Ascending aorta (tissue), 2 donors: ENCODE measurements at regions of chr11 and their contacts with region 1.

Region 1: GRCh38 chr11:3849297-3849874 is 6.1 kb upstream of the STIM1 start:
- DNase-seq: no peak
- H3K4me3 ChIP-seq: no peak overlapping the region
- H3K27ac ChIP-seq: no peak overlapping the region
- H3K4me1 ChIP-seq: no peaks in the 10 kb centered on the region
- H3K27me3 ChIP-seq: no peaks in the 10 kb centered on the region
- CTCF ChIP-seq: peak; percentile 46 to 68 (median 64)

Region 2: DNA sequence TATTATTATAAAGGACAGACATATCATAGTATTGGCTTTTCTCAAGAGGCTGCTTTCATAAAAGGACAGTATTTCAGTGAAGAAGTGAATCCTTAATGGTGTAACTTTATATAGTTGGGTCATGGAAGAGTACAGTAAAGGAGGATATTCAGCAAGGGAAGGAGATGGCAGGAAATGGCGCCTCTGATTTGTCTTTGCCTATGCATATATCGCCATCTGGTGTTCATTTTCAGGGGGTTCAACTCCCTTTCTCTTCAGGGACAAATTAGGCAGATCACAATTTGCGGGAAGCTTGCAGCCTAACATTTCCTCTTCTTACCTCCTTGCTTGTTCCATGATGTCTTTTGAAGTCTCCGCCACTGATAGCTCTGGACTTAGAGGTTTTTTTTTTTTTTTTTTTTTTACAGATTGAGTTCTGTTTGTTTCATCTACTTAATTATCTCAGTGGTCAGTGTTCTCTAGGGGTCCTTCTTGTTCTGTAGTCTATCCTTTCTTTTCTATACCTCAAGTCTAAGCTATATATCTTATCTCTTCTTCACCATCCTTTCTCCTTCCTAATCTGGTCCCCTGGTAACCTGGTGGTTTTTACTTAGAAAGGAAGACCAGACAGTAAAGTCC is 223.4 kb after region 1 on chr11:
- intact Hi-C with region 1: loop called (anchors 1 kb)
- DNase-seq: peak in 1 of 2 donors; percentile 74
- H3K4me3 ChIP-seq: no peak overlapping the region
- H3K27ac ChIP-seq: no peak overlapping the region
- H3K4me1 ChIP-seq: no peaks in the 10 kb centered on the region
- H3K27me3 ChIP-seq: no peaks in the 10 kb centered on the region
- CTCF ChIP-seq: peak; percentile 64 to 85 (median 78)